ENCODE measurements at regions of chr2 and their contacts with region 1.

Region 1: DNA sequence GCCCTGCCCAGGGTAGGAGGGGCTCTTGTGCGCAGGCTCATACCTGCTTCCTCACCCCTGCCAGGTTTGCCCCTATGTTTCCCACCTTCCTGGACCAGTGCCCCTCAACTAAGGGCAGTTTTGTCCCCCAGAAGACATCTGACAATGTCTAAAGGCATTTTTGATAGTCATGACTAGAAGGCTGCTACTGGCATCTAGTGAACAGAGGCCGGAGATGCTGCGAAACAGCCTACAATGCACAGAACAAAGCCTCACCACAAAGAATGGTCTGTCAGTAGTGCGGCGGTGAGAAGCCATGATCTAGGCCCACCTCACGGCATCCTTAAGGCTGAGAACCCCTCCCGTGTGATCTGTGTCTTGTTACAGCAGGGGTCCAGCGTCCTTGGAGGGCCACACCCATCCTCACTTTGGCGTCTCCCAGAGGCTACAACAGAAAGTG is 96.0 kb downstream of the TMEM17 start:
- DNase-seq: no peak
- H3K4me3 ChIP-seq: no peak overlapping the region
- H3K27ac ChIP-seq: peak overlapping the region in 2 of 4 donors; percentile 4 to 79
- H3K4me1 ChIP-seq: peaks cover 0 to 28% (median 23%) of the 10 kb centered on the region in 4 donors
- H3K27me3 ChIP-seq: no peaks in the 10 kb centered on the region
- CTCF ChIP-seq: no peak
- EP300 ChIP-seq: no peak
- POLR2A ChIP-seq: no peak

Region 2: DNA sequence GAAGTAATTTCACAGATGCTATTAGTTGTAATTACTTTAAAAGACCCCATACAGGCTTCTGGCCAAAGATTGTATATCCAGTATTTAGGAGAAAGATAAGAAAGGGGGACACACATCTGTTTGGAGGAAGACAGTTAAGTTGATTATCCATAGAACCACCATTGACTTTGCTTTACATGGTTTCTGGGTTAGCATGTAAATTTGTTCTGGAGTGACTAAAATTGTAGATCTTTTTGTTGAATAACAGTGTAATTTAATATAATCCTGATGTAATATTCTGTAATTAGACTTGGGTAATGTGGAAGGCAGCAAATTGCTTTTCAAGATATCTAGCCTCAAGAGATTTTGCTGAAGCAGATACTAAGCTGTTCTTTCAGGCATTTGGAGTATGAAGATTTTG is 487.3 kb before region 1 on chr2:
- intact Hi-C with region 1: loop called (anchors 1 kb)
- DNase-seq: no peak
- H3K4me3 ChIP-seq: no peak overlapping the region
- H3K27ac ChIP-seq: no peak overlapping the region
- H3K4me1 ChIP-seq: peaks cover 0 to 18% (median 14%) of the 10 kb centered on the region in 4 donors
- H3K27me3 ChIP-seq: no peaks in the 10 kb centered on the region
- CTCF ChIP-seq: no peak
- EP300 ChIP-seq: no peak
- POLR2A ChIP-seq: no peak

Region 3: DNA sequence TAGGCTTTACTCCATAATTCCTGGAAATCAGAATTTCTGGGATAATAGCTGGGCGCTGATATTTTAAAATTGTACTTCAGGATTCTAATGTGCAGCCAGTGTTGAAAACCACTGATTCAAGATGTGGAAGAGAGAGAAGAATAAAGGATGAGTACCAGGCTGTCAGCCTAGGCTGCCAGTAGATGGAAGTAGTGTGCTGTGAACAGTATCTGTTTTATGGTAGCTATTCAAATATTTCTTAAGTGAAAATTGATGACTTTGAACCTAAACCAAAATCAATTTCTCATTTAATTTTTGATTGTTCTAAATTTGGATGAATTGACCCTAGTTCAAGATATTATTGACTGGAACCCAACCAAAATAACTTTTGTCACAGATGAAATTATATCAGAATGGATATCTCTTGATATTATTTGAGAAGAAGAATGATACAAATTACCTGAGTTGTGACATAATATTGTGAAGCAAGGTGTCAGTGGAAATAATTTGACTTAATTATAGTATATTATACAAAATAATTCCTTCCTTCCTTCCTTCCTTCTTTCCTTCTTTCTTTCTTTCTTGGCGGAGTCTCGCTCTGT is 416.5 kb before region 1 on chr2:
- intact Hi-C with region 1: loop called (anchors 2 kb)
- DNase-seq: no peak
- H3K4me3 ChIP-seq: no peak overlapping the region
- H3K27ac ChIP-seq: no peak overlapping the region
- H3K4me1 ChIP-seq: no peaks in the 10 kb centered on the region
- H3K27me3 ChIP-seq: no peaks in the 10 kb centered on the region
- CTCF ChIP-seq: peak; percentile 5 to 63 (median 54)
- EP300 ChIP-seq: no peak
- POLR2A ChIP-seq: no peak

Region 4: DNA sequence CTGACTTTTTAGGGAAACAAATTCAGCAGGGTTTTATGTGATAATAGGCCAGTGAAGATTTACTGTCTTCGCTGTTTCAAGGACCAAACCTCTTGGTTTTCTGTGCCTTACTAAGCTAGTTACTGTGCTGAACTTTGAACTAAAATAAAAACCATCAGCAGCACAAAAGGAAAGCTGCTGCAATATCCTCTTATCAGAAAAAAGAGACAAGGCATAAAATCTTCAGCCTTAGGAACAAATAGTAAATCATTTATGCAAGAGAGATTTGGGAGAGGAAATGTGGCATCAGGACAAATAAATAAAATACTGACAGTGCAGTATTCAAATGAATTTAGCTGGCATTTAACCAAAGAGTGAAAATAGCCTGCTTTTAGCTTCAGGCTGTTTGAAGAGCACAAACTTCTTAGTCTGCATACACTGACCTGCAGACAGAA is 231.4 kb after region 1 on chr2:
- intact Hi-C with region 1: no loop called
- DNase-seq: no peak
- H3K4me3 ChIP-seq: no peak overlapping the region
- H3K27ac ChIP-seq: peak overlapping the region in 3 of 4 donors; percentile 11 to 29 (median 24)
- H3K4me1 ChIP-seq: peaks cover 0 to 29% (median 23%) of the 10 kb centered on the region in 4 donors
- H3K27me3 ChIP-seq: no peaks in the 10 kb centered on the region
- CTCF ChIP-seq: no peak
- EP300 ChIP-seq: no peak
- POLR2A ChIP-seq: no peak

Measured in sigmoid colon (tissue), 7 donors.